BJ (cell line): ENCODE measurements at regions of chr17 and their contacts with region 1.

Region 1: DNA sequence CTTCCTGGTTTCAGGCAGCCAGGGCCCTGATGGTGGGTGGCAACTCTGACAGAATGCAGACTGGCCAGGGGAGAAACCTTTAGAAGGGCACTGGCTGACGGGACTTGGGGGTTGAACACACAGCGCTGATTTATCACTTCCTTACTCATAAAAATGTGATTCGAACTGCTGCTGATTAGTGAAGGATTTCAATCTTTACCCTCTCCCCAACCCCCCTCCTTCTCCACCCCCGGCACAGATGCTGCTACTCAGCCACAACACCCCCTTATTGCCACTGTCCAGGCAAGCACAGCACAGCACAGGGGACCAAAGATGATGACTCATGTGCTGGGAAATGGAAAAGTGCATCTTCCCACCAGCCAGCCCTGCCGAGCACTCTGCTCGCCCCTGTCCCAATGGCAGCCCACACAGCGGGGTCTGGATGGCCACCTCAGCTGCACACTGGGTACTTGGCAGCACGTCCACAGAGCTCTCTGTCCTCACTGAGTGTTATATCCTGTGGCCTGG is 70.1 kb downstream of the SMG6 start:
- DNase-seq: peak; percentile 66
- H3K4me3 ChIP-seq: no peak overlapping the region
- H3K27me3 ChIP-seq: no peaks in the 10 kb centered on the region
- CTCF ChIP-seq: no peak

Region 2: DNA sequence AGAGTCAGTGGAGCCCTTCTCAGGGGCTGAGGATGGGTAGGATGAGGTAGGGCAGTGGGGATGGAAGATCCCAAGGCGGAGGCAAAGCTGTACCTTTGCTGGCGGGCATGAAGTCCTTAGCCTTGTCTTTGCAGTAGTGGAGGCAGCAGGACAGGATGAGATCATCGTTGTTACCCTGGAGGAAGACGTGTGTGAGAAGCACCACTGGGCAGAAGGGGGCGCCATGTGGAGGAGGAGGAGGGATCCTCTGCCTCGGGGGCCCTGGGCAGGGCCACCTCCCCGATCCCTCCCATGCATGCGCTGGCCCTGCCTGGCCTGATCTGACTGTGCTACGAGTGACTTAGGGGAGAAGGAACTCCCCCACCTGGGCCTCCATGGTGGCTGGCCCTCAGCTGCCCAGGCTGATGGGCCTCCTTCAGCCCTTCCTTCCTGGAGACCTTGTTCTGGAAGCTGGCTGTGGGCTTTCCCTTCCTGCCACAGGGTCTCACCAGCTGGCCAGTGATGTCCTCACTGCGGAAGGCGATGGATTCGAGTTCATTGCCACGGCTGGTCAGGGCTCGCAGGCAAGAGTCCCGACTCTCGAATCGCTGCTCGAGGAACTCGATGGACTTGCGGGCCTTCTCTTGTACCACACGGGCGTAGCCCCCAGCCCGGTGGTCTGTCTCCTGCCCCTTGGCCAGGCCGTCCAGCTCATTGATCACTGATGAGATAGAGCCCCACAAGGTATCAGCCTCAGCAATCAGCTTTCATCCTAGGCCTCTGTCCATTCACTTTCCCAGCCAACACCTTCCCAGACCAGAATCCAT is 168.3 kb before region 1 on chr17:
- CTCF ChIA-PET with region 1: interaction called, 13 read pairs
- POLR2A ChIA-PET with region 1: no interaction called
- DNase-seq: no peak
- H3K4me3 ChIP-seq: no peak overlapping the region
- H3K27me3 ChIP-seq: no peaks in the 10 kb centered on the region
- CTCF ChIP-seq: peak; percentile 65

Region 3: GRCh38 chr17:2222901-2223616 is 10.4 kb before region 1 on chr17:
- CTCF ChIA-PET with region 1: interaction called, 13 read pairs
- POLR2A ChIA-PET with region 1: no interaction called
- DNase-seq: no peak
- H3K4me3 ChIP-seq: no peak overlapping the region
- H3K27me3 ChIP-seq: no peaks in the 10 kb centered on the region
- CTCF ChIP-seq: no peak